ENCODE measurements at regions of chr11 and their contacts with region 1.

Region 1: DNA sequence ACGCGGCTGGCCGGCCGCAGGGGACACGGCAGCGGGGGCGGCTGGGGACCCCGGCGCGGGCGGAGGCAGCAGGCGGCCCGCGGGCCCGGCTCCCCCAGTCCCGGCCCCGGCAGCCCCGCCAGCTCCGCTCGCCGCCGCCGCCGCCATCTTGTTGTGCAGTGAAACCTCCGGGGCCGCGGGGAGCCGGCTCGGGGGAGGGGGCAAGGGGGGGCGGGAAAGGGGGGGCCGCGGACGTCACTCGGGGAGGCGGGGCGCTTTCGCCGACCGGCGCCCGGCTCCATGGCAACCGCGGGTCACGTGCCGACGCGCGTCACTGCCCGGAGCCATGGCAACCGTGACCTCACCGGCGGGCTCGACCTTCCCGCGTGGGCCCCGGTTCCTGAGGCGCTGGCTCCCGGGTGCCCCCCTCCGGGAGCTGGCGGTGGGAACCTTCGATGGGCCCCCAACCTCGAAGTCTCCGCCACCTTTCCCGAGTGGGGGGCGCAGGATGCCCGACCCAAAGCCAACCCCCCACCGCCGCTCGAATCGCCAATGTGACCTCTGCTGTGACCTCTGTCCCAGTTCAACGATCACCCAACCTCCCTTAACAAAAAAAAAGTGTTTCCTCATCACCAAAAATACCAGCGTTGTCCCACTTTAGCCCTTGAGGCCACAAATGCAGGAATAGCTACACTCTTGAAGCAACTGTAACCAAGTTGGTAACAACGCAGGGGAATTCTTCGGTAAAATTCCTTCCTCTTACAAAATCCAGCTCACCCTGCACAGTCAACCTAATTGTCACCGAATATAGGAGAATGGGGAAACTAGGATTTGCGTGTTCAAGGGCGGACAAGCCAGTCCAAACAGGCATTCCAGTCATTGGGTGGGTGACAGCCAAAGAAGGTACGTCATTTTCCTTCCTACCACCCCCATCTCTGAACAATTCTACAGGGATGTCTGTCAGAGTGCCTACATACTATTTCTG is at the start of gene SIK3:
- DNase-seq: peak; percentile 97
- H3K4me3 ChIP-seq: peak within 1 kb of the TSS; percentile 77 to 98 (median 91)
- H3K27ac ChIP-seq: peak within 1 kb of the TSS; percentile 97 to 100 (median 98)
- H3K4me1 ChIP-seq: peaks cover 0 to 49% (median 44%) of the 10 kb centered on the region in 4 donors
- H3K27me3 ChIP-seq: no peaks in the 10 kb centered on the region
- CTCF ChIP-seq: peak in 2 of 4 experiments; percentile 20 to 32
- EP300 ChIP-seq: peak in 2 of 4 donors; percentile 76 to 82
- POLR2A ChIP-seq: peak; percentile 51 to 76
- total RNA-seq, gene SIK3: 35.3 to 53.2 (median 40.9) TPM

Region 2: DNA sequence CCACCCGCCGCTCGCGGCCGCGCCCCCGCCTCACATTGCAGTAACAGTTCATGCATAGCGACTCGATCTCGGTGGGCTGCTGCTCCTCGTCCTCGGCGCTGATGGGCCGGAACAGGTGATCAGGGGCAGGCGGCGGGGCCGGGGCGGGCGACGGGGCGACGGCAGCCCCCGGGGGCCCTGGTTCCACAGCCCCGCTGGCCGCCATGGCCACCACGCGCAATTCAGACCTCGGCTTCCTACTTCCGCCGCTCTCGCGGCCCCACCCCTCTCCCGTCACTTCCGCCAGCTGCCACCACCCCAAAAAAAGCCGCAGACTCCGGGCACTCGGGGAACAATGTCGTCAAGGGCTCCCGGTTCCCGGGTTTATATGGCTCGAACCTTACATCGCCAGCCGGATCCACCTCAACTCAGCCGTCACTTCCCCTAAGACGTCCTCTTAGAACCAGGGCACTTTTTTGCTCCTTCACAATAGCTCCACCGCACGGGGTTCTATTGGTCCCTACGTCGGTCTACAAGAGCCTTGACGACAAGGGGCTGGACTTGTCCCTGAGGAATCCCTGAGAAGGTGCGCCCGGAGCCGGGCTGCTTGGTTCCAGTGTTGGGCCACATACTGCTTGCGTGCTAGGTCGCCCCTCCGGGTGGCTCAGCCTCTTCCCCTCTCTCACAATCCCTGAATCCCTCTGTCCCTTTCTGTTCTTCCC is 310.6 kb before region 1 on chr11 and contains the start of gene ZPR1:
- intact Hi-C with region 1: loop called (anchors 2 kb)
- DNase-seq: peak; percentile 92
- H3K4me3 ChIP-seq: peak within 1 kb of the TSS; percentile 86 to 97 (median 93)
- H3K27ac ChIP-seq: peak within 1 kb of the TSS; percentile 84 to 90 (median 88)
- H3K4me1 ChIP-seq: peaks cover 0 to 29% (median 20%) of the 10 kb centered on the region in 4 donors
- H3K27me3 ChIP-seq: no peaks in the 10 kb centered on the region
- CTCF ChIP-seq: peak in 1 of 4 experiments; percentile 15
- EP300 ChIP-seq: no peak
- POLR2A ChIP-seq: peak; percentile 66 to 68
- total RNA-seq, gene ZPR1: 14.7 to 28.6 (median 21.0) TPM

Region 3: GRCh38 chr11:116885951-116886655 is 212.4 kb before region 1 on chr11:
- intact Hi-C with region 1: loop called (anchors 2 kb)
- DNase-seq: no peak
- H3K4me3 ChIP-seq: no peak overlapping the region
- H3K27ac ChIP-seq: peak overlapping the region; percentile 68 to 80 (median 77)
- H3K4me1 ChIP-seq: peaks cover 0 to 32% (median 24%) of the 10 kb centered on the region in 4 donors
- H3K27me3 ChIP-seq: no peaks in the 10 kb centered on the region
- CTCF ChIP-seq: no peak
- EP300 ChIP-seq: no peak
- POLR2A ChIP-seq: no peak

Region 4: GRCh38 chr11:116986521-116987105 is 111.9 kb before region 1 on chr11:
- intact Hi-C with region 1: loop called (anchors 5 kb)
- DNase-seq: no peak
- H3K4me3 ChIP-seq: no peak overlapping the region
- H3K27ac ChIP-seq: peak overlapping the region; percentile 41 to 84 (median 72)
- H3K4me1 ChIP-seq: peaks cover 0 to 81% (median 68%) of the 10 kb centered on the region in 4 donors
- H3K27me3 ChIP-seq: no peaks in the 10 kb centered on the region
- CTCF ChIP-seq: no peak
- EP300 ChIP-seq: no peak
- POLR2A ChIP-seq: no peak

Measured in sigmoid colon (tissue), 7 donors.